Calu3 (cell line): ENCODE measurements at regions of chr15 and their contacts with region 1.

Region 1: GRCh38 chr15:63891079-63891767 is 57.5 kb upstream of the HERC1 start:
- DNase-seq: peak; percentile 88
- H3K4me3 Mint-ChIP-seq: no peak overlapping the region
- H3K27ac Mint-ChIP-seq: no peak overlapping the region
- H3K4me1 Mint-ChIP-seq: peaks cover 5% of the 10 kb centered on the region
- H3K27me3 Mint-ChIP-seq: no peaks in the 10 kb centered on the region
- CTCF ChIP-seq: peak; percentile 87

Region 2: GRCh38 chr15:63560741-63561448 is 330.3 kb before region 1 on chr15:
- CTCF ChIA-PET with region 1: no interaction called
- intact Hi-C with region 1: no loop called
- DNase-seq: no peak
- H3K4me3 Mint-ChIP-seq: no peak overlapping the region
- H3K27ac Mint-ChIP-seq: no peak overlapping the region
- H3K4me1 Mint-ChIP-seq: no peaks in the 10 kb centered on the region
- H3K27me3 Mint-ChIP-seq: no peaks in the 10 kb centered on the region
- CTCF ChIP-seq: no peak

Region 3: DNA sequence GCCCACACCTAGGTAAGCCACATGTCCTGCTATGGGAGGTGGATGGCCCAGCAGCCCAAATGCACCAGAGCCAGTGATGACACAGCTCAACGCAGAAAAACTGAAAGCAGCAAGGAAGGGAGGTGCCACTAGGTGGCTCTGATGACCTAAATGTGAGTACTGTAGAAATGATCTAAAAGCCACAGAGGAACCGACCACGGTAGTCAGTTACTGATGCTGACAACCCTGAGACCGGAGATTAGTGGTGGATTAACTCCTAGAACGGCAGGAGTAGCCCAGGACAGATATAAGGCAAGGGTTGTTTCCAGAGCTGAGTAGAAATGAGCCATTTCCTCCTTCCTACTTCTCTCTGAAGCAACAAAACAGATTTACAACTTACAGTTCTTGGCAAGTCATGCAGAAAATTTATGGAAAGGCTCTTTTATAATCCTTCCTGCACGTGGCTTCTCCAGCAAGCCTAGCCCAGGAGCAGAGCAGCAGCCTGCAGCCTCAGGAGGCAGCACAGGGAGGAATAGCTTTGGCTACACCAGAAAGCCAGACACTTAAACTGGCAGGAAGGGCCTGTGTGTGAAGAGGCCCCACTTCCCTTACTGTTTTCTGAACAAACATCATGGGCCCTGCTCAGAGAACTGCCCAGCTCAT is 280.9 kb before region 1 on chr15:
- CTCF ChIA-PET with region 1: no interaction called
- intact Hi-C with region 1: loop called (anchors 5 kb)
- DNase-seq: peak; percentile 77
- H3K4me3 Mint-ChIP-seq: no peak overlapping the region
- H3K27ac Mint-ChIP-seq: no peak overlapping the region
- H3K4me1 Mint-ChIP-seq: peaks cover 24% of the 10 kb centered on the region
- H3K27me3 Mint-ChIP-seq: no peaks in the 10 kb centered on the region
- CTCF ChIP-seq: peak; percentile 69

Region 4: GRCh38 chr15:63752075-63752684 is 139.0 kb before region 1 on chr15:
- CTCF ChIA-PET with region 1: interaction called, 7 read pairs
- intact Hi-C with region 1: loop called (anchors 1 kb)
- DNase-seq: peak; percentile 61
- H3K4me3 Mint-ChIP-seq: no peak overlapping the region
- H3K27ac Mint-ChIP-seq: no peak overlapping the region
- H3K4me1 Mint-ChIP-seq: no peaks in the 10 kb centered on the region
- H3K27me3 Mint-ChIP-seq: no peaks in the 10 kb centered on the region
- CTCF ChIP-seq: peak; percentile 68

Region 5: DNA sequence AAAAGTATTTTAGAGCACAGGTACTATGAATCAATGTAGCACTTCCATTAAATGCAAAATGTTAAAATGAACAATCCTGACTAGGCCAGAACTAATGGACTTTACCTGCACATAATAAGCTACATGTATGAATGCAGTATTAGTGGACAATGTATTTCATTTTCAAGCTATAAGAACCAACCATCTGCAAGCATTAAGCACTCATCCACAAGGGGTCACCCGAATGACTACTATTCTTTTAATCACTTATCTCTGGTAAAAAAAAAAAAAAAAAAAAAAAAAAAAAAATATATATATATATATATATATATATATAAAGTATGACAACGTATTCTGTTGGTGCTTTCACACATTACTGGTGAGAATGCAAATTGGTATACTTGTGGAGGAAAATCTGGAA is 64.7 kb before region 1 on chr15:
- CTCF ChIA-PET with region 1: no interaction called
- intact Hi-C with region 1: loop called (anchors 5 kb)
- DNase-seq: peak; percentile 16
- H3K4me3 Mint-ChIP-seq: no peak overlapping the region
- H3K27ac Mint-ChIP-seq: no peak overlapping the region
- H3K4me1 Mint-ChIP-seq: no peaks in the 10 kb centered on the region
- H3K27me3 Mint-ChIP-seq: no peaks in the 10 kb centered on the region
- CTCF ChIP-seq: no peak

Region 6: GRCh38 chr15:63858880-63859279 is 32.3 kb before region 1 on chr15:
- CTCF ChIA-PET with region 1: no interaction called
- intact Hi-C with region 1: no loop called
- DNase-seq: peak; percentile 13
- H3K4me3 Mint-ChIP-seq: no peak overlapping the region
- H3K27ac Mint-ChIP-seq: no peak overlapping the region
- H3K4me1 Mint-ChIP-seq: no peaks in the 10 kb centered on the region
- H3K27me3 Mint-ChIP-seq: peaks cover 18% of the 10 kb centered on the region
- CTCF ChIP-seq: no peak

Region 7: DNA sequence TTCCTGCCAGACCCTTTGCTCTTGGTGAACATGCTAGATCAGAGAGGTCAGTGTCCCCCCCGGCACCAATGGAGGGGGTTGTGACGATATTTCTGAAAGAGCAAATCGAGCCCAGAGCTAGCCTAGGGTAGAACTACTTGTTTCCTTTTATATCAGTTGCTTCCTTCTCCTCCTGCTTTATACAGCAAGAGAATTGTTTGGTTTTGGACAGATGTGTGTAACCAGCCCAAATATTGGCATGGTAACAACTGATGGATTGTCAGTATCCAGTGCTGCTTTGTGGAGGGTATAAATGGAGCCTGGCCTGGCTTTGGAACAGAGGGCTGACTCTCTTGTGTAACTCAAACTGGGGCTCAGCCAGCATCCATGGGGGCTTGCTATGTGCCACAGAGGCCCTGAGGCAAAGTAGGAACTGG is 231.7 kb after region 1 on chr15:
- CTCF ChIA-PET with region 1: no interaction called
- intact Hi-C with region 1: no loop called
- DNase-seq: no peak
- H3K4me3 Mint-ChIP-seq: no peak overlapping the region
- H3K27ac Mint-ChIP-seq: no peak overlapping the region
- H3K4me1 Mint-ChIP-seq: no peaks in the 10 kb centered on the region
- H3K27me3 Mint-ChIP-seq: no peaks in the 10 kb centered on the region
- CTCF ChIP-seq: no peak